ENCODE measurements at regions of chr17 and their contacts with region 1.

Region 1: DNA sequence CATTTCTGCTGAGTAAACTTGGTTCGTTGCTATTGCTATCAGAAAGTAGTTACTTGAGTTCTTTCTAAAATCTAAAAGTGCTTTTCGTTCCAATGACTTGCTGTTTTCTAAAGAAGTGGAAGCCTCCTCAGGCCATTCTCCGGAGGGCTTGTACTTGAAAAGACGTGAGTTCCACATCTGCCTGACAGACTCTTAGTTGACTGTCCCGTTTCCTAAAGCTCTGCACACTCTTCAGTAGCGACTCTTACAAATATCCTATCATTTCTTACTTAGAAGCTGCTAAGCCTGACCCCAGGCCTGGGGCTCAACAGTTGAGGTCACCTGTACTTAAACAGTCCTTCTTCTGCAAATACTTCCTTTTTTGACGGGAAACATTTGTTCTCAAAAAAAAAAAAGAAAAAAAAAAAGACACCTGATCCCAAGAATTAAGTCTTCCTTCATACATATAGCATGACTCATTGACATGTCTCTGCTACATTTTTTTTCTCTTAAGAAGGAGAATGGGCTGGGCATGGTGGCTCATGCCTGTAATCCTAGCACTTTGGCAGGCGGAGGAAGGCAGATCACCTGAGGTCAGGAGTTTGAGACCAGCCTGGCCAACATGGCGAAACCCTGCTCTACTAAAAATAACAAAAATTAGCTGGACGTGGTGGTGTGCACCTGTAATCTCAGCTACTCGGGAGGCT is 61.5 kb downstream of the DHRS7C start:
- DNase-seq: no peak
- ATAC-seq: no peak

Region 2: GRCh38 chr17:9606453-9606852 is 123.4 kb before region 1 on chr17:
- intact Hi-C with region 1: no loop called
- DNase-seq: no peak
- ATAC-seq: no peak

Region 3: GRCh38 chr17:9842057-9842758 is 112.3 kb after region 1 on chr17:
- intact Hi-C with region 1: no loop called
- DNase-seq: peak; percentile 64
- ATAC-seq: peak; percentile 86

Region 4: GRCh38 chr17:9905902-9906301 is 176.0 kb after region 1 on chr17:
- intact Hi-C with region 1: loop called (anchors 10 kb)
- DNase-seq: peak; percentile 70
- ATAC-seq: peak; percentile 44